ENCODE measurements at regions of chr12 and their contacts with region 1.

Region 1: GRCh38 chr12:23987046-23987445 is 37.6 kb upstream of the SOX5 start:
- DNase-seq: no peak
- ATAC-seq: no peak
- H3K4me3 ChIP-seq: no peak overlapping the region
- H3K27ac ChIP-seq: no peak overlapping the region
- H3K4me1 ChIP-seq: no peaks in the 10 kb centered on the region
- H3K27me3 ChIP-seq: no peaks in the 10 kb centered on the region
- CTCF ChIP-seq: no peak

Region 2: DNA sequence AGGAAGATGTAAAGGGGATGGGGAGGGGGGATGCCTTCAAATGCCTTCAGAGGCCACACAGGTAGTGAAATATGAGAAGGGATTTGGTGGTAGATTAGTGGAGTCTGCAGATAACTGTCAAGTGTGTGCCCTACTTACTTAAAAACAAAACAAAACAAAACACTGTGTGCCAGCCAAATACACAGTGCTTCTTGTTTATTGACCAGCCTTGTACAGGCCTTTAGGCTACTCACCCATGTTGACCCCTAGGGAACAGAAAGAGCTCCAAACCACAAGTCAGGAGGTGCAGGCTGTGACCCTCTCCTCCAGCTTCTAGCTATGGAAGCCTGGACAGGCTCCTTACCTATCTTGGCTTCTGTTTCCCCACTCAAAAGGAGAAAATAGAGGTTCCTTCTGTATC is 800.1 kb before region 1 on chr12:
- intact Hi-C with region 1: loop called in 1 of 2 experiments (anchors 10 kb)
- DNase-seq: no peak
- ATAC-seq: no peak
- H3K4me3 ChIP-seq: no peak overlapping the region
- H3K27ac ChIP-seq: no peak overlapping the region
- H3K4me1 ChIP-seq: no peaks in the 10 kb centered on the region
- H3K27me3 ChIP-seq: no peaks in the 10 kb centered on the region
- CTCF ChIP-seq: no peak

Region 3: GRCh38 chr12:24185782-24186181 is 198.7 kb after region 1 on chr12:
- intact Hi-C with region 1: no loop called
- DNase-seq: no peak
- ATAC-seq: no peak
- H3K4me3 ChIP-seq: no peak overlapping the region
- H3K27ac ChIP-seq: no peak overlapping the region
- H3K4me1 ChIP-seq: no peaks in the 10 kb centered on the region
- H3K27me3 ChIP-seq: no peaks in the 10 kb centered on the region
- CTCF ChIP-seq: no peak